ENCODE measurements at regions of chrX and their contacts with region 1.

Region 1: DNA sequence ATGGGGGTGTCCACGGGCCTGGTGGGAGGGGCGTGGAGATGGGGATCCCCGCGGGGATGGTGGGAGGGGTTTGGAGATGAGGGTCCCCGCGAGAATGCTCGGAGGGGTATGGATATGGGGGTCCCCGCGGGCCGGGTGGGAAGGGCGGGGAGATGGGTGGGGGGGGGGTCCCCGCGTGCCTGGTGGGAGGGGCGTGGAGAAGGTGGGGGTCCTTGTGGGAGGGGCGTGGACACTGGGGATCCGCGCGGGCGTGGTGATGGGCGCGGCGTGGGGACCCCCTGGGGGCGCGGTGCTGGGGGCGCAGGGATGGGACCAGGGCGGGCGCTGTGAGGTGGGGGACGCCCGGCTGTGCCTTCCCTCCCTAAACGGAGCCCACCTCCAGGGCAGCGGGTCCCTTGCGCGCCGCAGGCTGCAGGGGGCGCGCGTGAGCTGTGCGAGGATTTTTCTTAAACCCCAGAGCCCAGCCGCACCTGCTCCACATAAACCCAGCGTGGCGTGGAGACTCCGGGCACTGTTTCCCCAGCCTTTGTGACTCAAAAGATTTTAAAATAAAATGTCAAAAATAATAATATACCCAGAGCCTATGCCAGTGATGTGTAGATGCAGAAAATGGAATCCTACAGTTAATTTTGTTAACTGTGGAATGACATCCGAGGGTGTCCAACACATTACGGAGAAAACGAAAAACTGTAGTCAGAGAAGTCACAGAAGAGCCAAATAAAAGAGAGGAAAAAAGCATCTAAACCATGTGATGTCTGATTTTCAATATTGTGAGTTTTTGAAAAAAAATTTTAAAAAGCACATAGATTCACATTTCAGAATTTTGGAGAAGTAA is 1.5 kb upstream of the ASMTL start:
- DNase-seq: peak; percentile 82
- H3K4me3 Mint-ChIP-seq: peak overlapping the region; percentile 68
- H3K27ac Mint-ChIP-seq: peak overlapping the region; percentile 36
- H3K4me1 Mint-ChIP-seq: peaks cover 13% of the 10 kb centered on the region
- H3K27me3 Mint-ChIP-seq: no peaks in the 10 kb centered on the region

Region 2: GRCh38 chrX:1205680-1206611 is 248.2 kb before region 1 on chrX:
- intact Hi-C with region 1: loop called (anchors 5 kb)
- DNase-seq: peak; percentile 32
- H3K4me3 Mint-ChIP-seq: peak overlapping the region; percentile 57
- H3K27ac Mint-ChIP-seq: no peak overlapping the region
- H3K4me1 Mint-ChIP-seq: peaks cover 31% of the 10 kb centered on the region
- H3K27me3 Mint-ChIP-seq: peaks cover 1% of the 10 kb centered on the region

Region 3: GRCh38 chrX:1391707-1392375 is 62.3 kb before region 1 on chrX and contains the start of gene SLC25A6:
- intact Hi-C with region 1: loop called (anchors 1 kb)
- DNase-seq: peak; percentile 100
- H3K4me3 Mint-ChIP-seq: peak within 1 kb of the TSS; percentile 93
- H3K27ac Mint-ChIP-seq: peak within 1 kb of the TSS; percentile 95
- H3K4me1 Mint-ChIP-seq: peaks cover 45% of the 10 kb centered on the region
- H3K27me3 Mint-ChIP-seq: no peaks in the 10 kb centered on the region
- total RNA-seq, gene SLC25A6: 281 and 289 TPM in 2 replicates

Region 4: GRCh38 chrX:1591102-1591900 is 137.1 kb after region 1 on chrX and contains the start of gene AKAP17A:
- intact Hi-C with region 1: loop called (anchors 1 kb)
- DNase-seq: peak; percentile 99
- H3K4me3 Mint-ChIP-seq: peak within 1 kb of the TSS; percentile 95
- H3K27ac Mint-ChIP-seq: peak within 1 kb of the TSS; percentile 93
- H3K4me1 Mint-ChIP-seq: peaks cover 10% of the 10 kb centered on the region
- H3K27me3 Mint-ChIP-seq: no peaks in the 10 kb centered on the region
- total RNA-seq, gene AKAP17A: 63.9 and 66.1 TPM in 2 replicates

Region 5: GRCh38 chrX:2595258-2595657 is 1141.1 kb after region 1 on chrX:
- intact Hi-C with region 1: loop called (anchors 1 kb)
- DNase-seq: no peak
- H3K4me3 Mint-ChIP-seq: no peak overlapping the region
- H3K27ac Mint-ChIP-seq: no peak overlapping the region
- H3K4me1 Mint-ChIP-seq: peaks cover 18% of the 10 kb centered on the region
- H3K27me3 Mint-ChIP-seq: no peaks in the 10 kb centered on the region

Region 6: GRCh38 chrX:2707334-2707760 is 1253.2 kb after region 1 on chrX:
- intact Hi-C with region 1: loop called (anchors 5 kb)
- DNase-seq: peak; percentile 59
- H3K4me3 Mint-ChIP-seq: peak overlapping the region; percentile 68
- H3K27ac Mint-ChIP-seq: peak overlapping the region; percentile 88
- H3K4me1 Mint-ChIP-seq: peaks cover 73% of the 10 kb centered on the region
- H3K27me3 Mint-ChIP-seq: no peaks in the 10 kb centered on the region